ENCODE measurements at regions of chr17 and their contacts with region 1.

Region 1: GRCh38 chr17:29293890-29294579 is at the start of gene NUFIP2:
- DNase-seq: peak; percentile 93 to 99 (median 98)
- ATAC-seq: peak; percentile 93
- H3K4me3 ChIP-seq: peak within 1 kb of the TSS; percentile 98
- H3K4me3 Mint-ChIP-seq: peak within 1 kb of the TSS; percentile 99 to 100 (median 100)
- H3K27ac ChIP-seq: peak within 1 kb of the TSS; percentile 90
- H3K27ac Mint-ChIP-seq: peak within 1 kb of the TSS; percentile 97 to 100 (median 99)
- H3K4me1 ChIP-seq: peaks cover 28 to 36% of the 10 kb centered on the region in 2 donors
- H3K4me1 Mint-ChIP-seq: peaks cover 26 to 45% (median 41%) of the 10 kb centered on the region in 7 donors
- H3K27me3 ChIP-seq: no peaks in the 10 kb centered on the region
- H3K27me3 Mint-ChIP-seq: peaks cover 0 to 4% (median 0%) of the 10 kb centered on the region in 5 donors
- total RNA-seq, gene NUFIP2: 60.4 to 85.3 (median 73.0) TPM

Region 2: DNA sequence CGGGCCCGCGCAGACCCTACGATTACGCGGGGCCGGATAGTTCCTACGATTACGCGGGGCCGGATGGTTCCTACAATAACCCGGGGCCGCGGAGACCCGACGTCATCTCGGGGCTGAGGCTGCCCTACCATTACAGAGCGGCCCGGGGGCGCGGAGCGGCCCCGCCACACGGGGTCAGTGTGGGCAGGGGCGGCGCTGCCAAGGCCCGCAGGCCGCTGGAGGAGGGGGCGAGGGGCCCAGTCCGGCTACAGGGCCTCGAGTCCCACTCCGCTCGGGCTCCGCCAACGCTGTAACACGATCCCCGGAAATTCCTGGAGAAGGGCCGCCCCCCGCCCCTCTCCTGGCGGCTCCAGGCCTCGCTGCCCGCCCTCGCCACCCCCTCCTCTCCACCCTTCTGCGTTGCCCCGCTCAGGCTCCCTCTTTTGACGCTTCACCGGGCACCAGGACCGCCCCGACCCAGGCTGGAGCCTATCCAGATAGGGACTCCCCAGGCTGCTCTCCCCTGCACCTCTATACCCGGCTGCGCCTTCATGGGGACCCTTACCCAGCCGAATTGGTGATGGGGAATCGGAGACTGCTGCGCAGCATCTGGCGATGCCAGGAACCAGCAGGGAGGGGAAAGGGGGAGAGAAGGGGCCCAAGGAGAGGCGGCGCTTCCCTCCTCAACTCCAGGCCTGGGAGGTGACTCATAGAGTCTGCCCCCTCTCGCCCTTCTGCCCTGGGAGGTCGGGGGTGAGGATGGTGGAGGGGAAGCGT is 576.3 kb before region 1 on chr17 and contains the start of gene RAB34:
- CTCF ChIA-PET with region 1: interaction called, 3 read pairs
- POLR2A ChIA-PET with region 1: interaction called, 4 read pairs
- intact Hi-C with region 1: loop called in 1 of 2 experiments (anchors 1 kb)
- DNase-seq: peak in 2 of 9 donors; percentile 18 to 21
- ATAC-seq: no peak
- H3K4me3 ChIP-seq: no peak within 1 kb of the TSS
- H3K4me3 Mint-ChIP-seq: peak within 1 kb of the TSS; percentile 58 to 99 (median 76)
- H3K27ac ChIP-seq: peak within 1 kb of the TSS; percentile 52
- H3K27ac Mint-ChIP-seq: peak within 1 kb of the TSS; percentile 59 to 97 (median 85)
- H3K4me1 ChIP-seq: peaks cover 26 to 30% of the 10 kb centered on the region in 2 donors
- H3K4me1 Mint-ChIP-seq: peaks cover 17 to 57% (median 35%) of the 10 kb centered on the region in 7 donors
- H3K27me3 ChIP-seq: no peaks in the 10 kb centered on the region
- H3K27me3 Mint-ChIP-seq: peaks cover 0 to 24% (median 6%) of the 10 kb centered on the region in 5 donors
- total RNA-seq, gene RAB34: 11.0 to 50.2 (median 16.4) TPM

Region 3: DNA sequence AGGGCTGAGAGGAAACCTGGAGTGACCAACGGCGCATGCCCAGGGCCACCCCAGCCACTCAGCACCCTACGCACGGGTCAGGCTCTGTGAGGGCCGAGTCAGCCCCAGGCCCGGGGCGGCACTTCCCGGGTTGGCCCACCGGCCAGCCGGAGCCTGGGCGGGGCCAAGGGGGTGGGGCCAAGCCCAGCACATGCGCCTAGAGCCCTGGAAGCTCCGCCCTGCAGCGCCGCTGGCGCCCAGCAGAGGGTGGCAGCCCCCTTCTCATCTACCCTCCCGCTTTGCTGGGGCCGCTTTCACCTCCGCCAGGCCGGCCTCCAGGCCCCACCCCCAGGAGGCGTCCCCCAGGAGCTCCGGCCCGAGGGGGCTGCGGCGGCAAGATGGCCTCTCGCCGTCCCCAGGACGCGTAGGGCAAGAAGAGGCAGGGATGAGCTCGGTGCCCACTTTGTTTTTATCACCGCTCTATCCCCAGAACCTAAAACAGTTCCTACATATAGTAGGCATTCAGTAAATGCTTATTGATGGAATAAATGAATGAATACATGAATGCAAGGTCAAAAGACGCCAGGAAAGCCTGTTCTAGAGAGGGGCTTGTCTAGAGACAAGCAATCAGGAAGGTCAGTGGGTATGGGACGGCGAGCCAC is 145.1 kb before region 1 on chr17:
- CTCF ChIA-PET with region 1: interaction called, 3 read pairs
- POLR2A ChIA-PET with region 1: interaction called, 6 read pairs
- intact Hi-C with region 1: loop called (anchors 1 to 2 kb)
- DNase-seq: peak; percentile 82 to 97 (median 89)
- ATAC-seq: peak; percentile 99
- H3K4me3 ChIP-seq: peak overlapping the region; percentile 58
- H3K4me3 Mint-ChIP-seq: peak overlapping the region; percentile 70 to 84 (median 77)
- H3K27ac ChIP-seq: peak overlapping the region; percentile 73
- H3K27ac Mint-ChIP-seq: peak overlapping the region; percentile 71 to 93 (median 87)
- H3K4me1 ChIP-seq: peaks cover 9 to 22% of the 10 kb centered on the region in 2 donors
- H3K4me1 Mint-ChIP-seq: peaks cover 37 to 59% (median 45%) of the 10 kb centered on the region in 7 donors
- H3K27me3 ChIP-seq: no peaks in the 10 kb centered on the region
- H3K27me3 Mint-ChIP-seq: no peaks in the 10 kb centered on the region

Region 4: GRCh38 chr17:29252101-29252866 is 41.8 kb before region 1 on chr17:
- CTCF ChIA-PET with region 1: interaction called, 4 read pairs
- POLR2A ChIA-PET with region 1: interaction called, 6 read pairs
- intact Hi-C with region 1: loop called (anchors 1 to 2 kb)
- DNase-seq: peak in 1 of 9 donors; percentile 6
- ATAC-seq: no peak
- H3K4me3 ChIP-seq: no peak overlapping the region
- H3K4me3 Mint-ChIP-seq: no peak overlapping the region
- H3K27ac ChIP-seq: no peak overlapping the region
- H3K27ac Mint-ChIP-seq: peak overlapping the region in 6 of 9 donors; percentile 20 to 43 (median 25)
- H3K4me1 ChIP-seq: no peaks in the 10 kb centered on the region
- H3K4me1 Mint-ChIP-seq: peaks cover 0 to 14% (median 3%) of the 10 kb centered on the region in 7 donors
- H3K27me3 ChIP-seq: no peaks in the 10 kb centered on the region
- H3K27me3 Mint-ChIP-seq: no peaks in the 10 kb centered on the region

Region 5: GRCh38 chr17:29378500-29378899 is 84.5 kb after region 1 on chr17:
- CTCF ChIA-PET with region 1: no interaction called
- POLR2A ChIA-PET with region 1: no interaction called
- intact Hi-C with region 1: no loop called
- DNase-seq: no peak
- ATAC-seq: no peak
- H3K4me3 ChIP-seq: no peak overlapping the region
- H3K4me3 Mint-ChIP-seq: no peak overlapping the region
- H3K27ac ChIP-seq: no peak overlapping the region
- H3K27ac Mint-ChIP-seq: no peak overlapping the region
- H3K4me1 ChIP-seq: no peaks in the 10 kb centered on the region
- H3K4me1 Mint-ChIP-seq: no peaks in the 10 kb centered on the region
- H3K27me3 ChIP-seq: no peaks in the 10 kb centered on the region
- H3K27me3 Mint-ChIP-seq: peaks cover 0 to 19% (median 0%) of the 10 kb centered on the region in 5 donors

Region 6: DNA sequence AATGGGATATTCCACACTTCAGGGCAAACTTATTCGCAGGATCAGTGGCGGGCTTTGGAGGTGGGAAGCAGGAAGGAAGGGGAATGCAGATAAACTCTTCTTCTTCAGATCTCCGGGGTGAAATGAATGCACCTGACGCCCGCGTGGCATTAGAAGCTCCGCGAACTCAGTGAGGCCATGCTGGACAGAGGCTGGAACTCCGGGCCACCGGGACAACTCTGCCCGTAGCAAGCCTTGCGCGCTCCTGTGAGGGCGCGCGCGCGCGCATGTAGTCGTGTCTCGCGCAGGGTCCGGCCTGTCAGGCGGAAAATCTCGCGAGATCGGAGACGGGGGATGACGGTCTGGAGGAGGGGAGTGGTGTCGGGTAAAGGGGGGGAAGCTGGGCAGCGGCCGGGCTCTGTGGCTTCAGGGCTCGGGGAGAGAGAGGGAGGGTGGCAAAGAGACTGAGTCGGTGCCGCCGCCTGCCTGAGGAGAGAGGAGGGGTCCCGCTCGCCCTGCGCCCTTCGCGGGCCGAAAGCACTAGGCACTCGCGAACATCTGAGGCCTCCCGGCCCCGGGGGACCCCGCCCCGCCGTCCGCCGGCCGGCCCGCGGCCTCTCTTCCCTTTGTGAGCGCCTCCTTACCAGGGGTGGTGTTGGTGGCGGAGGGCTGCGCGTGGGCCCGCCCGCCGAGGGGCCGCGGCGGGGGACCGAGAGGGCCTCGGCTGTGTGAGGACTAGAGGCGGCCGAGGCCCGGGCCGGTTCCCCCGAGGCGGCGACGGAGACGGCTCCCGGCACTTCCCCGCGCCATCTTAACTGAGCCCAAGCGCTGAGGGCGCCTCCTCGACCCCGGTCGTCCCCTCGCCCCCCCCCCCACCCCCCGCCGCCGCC is 96.2 kb after region 1 on chr17 and contains the start of gene TAOK1:
- CTCF ChIA-PET with region 1: no interaction called
- POLR2A ChIA-PET with region 1: no interaction called
- intact Hi-C with region 1: loop called (anchors 1 kb)
- DNase-seq: peak; percentile 93 to 98 (median 96)
- ATAC-seq: peak; percentile 97
- H3K4me3 ChIP-seq: peak within 1 kb of the TSS; percentile 94
- H3K4me3 Mint-ChIP-seq: peak within 1 kb of the TSS; percentile 95 to 99 (median 98)
- H3K27ac ChIP-seq: peak within 1 kb of the TSS; percentile 98
- H3K27ac Mint-ChIP-seq: peak within 1 kb of the TSS; percentile 92 to 98 (median 97)
- H3K4me1 ChIP-seq: peaks cover 14 to 25% of the 10 kb centered on the region in 2 donors
- H3K4me1 Mint-ChIP-seq: peaks cover 36 to 49% (median 44%) of the 10 kb centered on the region in 7 donors
- H3K27me3 ChIP-seq: no peaks in the 10 kb centered on the region
- H3K27me3 Mint-ChIP-seq: peaks cover 0 to 2% (median 0%) of the 10 kb centered on the region in 5 donors
- total RNA-seq, gene TAOK1: 62.4 to 70.1 (median 66.5) TPM

Region 7: DNA sequence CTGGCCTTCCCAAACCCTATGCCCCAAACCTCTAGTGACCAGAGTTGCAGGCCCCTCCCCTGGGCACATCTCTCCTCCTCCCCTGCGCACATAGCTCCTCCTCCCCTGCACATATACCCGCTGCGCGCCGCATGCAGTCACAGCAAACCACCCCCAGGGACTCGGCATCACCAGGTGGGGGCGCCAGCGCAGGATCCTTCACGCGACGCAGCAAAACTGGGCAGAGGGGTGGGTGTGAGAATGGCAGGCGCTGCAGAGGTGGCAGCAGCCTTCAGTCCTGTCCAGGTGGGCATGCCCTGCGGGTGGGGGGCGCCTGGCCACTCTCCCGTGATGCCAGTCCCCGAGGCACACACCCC is 323.1 kb after region 1 on chr17:
- CTCF ChIA-PET with region 1: no interaction called
- POLR2A ChIA-PET with region 1: interaction called, 3 read pairs
- intact Hi-C with region 1: loop called in 1 of 2 experiments (anchors 1 kb)
- DNase-seq: peak; percentile 77 to 91 (median 88)
- ATAC-seq: peak; percentile 80
- H3K4me3 ChIP-seq: peak overlapping the region; percentile 80
- H3K4me3 Mint-ChIP-seq: peak overlapping the region; percentile 78 to 93 (median 88)
- H3K27ac ChIP-seq: peak overlapping the region; percentile 38
- H3K27ac Mint-ChIP-seq: peak overlapping the region in 7 of 9 donors; percentile 2 to 91 (median 72)
- H3K4me1 ChIP-seq: peaks cover 36 to 42% of the 10 kb centered on the region in 2 donors
- H3K4me1 Mint-ChIP-seq: peaks cover 13 to 55% (median 38%) of the 10 kb centered on the region in 7 donors
- H3K27me3 ChIP-seq: no peaks in the 10 kb centered on the region
- H3K27me3 Mint-ChIP-seq: peaks cover 0 to 21% (median 0%) of the 10 kb centered on the region in 5 donors